ENCODE measurements at regions of chr5 and their contacts with region 1.

Region 1: DNA sequence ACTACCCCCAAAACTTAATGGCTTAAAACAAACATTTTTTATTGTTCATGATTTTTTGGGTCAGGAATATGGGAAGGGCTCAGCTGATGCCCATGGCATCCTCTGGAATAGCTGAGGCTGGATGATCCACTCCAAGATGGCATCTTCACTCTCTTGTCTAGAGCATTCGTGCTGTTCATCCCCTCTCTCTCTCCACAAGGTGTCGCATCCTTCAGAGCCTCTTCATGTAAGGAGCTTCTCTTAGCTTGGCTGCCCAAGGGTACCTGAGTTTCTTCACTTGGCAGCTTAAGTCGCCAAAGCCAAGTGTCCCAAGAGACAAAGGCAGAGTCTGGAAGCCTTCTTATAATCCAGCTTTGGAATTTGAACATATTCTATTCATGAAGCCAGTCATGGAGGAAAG is 294.7 kb downstream of the CHSY3 start:
- DNase-seq: peak; percentile 28
- ATAC-seq: peak; percentile 69
- H3K4me3 ChIP-seq: no peak overlapping the region
- H3K27ac ChIP-seq: no peak overlapping the region
- H3K4me1 ChIP-seq: no peaks in the 10 kb centered on the region
- H3K27me3 ChIP-seq: no peaks in the 10 kb centered on the region
- CTCF ChIP-seq: peak; percentile 52
- EP300 ChIP-seq: no peak
- POLR2A ChIP-seq: no peak
- RAD21 ChIP-seq: no peak

Region 2: DNA sequence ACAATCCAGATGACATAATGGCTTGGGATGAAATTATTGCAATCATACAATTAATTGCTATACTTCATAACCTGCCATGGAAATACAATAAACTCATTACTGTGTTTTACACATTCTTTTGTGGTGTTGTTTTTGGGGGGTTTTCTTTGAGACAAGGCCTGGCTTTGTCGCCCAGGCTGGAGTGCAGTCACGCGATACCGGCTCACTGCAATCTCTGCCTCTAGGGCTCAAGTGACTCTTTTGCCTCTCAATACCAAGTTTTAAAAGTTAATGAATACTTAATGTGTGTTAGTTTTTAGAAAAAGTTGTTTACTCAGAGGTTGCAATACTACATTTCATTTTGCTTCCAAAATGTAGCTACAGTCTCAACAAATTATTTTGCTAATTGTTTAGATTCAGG is 303.8 kb after region 1 on chr5:
- CTCF ChIA-PET with region 1: no interaction called
- POLR2A ChIA-PET with region 1: no interaction called
- in situ Hi-C with region 1: no loop called
- intact Hi-C with region 1: no loop called
- DNase-seq: no peak
- ATAC-seq: no peak
- H3K4me3 ChIP-seq: no peak overlapping the region
- H3K27ac ChIP-seq: no peak overlapping the region
- H3K4me1 ChIP-seq: no peaks in the 10 kb centered on the region
- H3K27me3 ChIP-seq: no peaks in the 10 kb centered on the region
- CTCF ChIP-seq: no peak
- EP300 ChIP-seq: no peak
- POLR2A ChIP-seq: no peak
- RAD21 ChIP-seq: no peak

Region 3: GRCh38 chr5:130545289-130545688 is 346.4 kb after region 1 on chr5:
- CTCF ChIA-PET with region 1: no interaction called
- POLR2A ChIA-PET with region 1: no interaction called
- in situ Hi-C with region 1: no loop called
- intact Hi-C with region 1: loop called (anchors 1 kb)
- DNase-seq: no peak
- ATAC-seq: no peak
- H3K4me3 ChIP-seq: no peak overlapping the region
- H3K27ac ChIP-seq: no peak overlapping the region
- H3K4me1 ChIP-seq: no peaks in the 10 kb centered on the region
- H3K27me3 ChIP-seq: no peaks in the 10 kb centered on the region; a peak in 1 of 5 replicates
- CTCF ChIP-seq: peak; percentile 32
- EP300 ChIP-seq: no peak
- POLR2A ChIP-seq: no peak
- RAD21 ChIP-seq: no peak

Region 4: GRCh38 chr5:130720355-130720754 is 521.4 kb after region 1 on chr5:
- CTCF ChIA-PET with region 1: no interaction called
- POLR2A ChIA-PET with region 1: no interaction called
- in situ Hi-C with region 1: no loop called
- intact Hi-C with region 1: loop called (anchors 2 kb)
- DNase-seq: peak; percentile 39
- ATAC-seq: peak; percentile 97
- H3K4me3 ChIP-seq: no peak overlapping the region
- H3K27ac ChIP-seq: no peak overlapping the region
- H3K4me1 ChIP-seq: no peaks in the 10 kb centered on the region
- H3K27me3 ChIP-seq: no peaks in the 10 kb centered on the region
- CTCF ChIP-seq: peak; percentile 59
- EP300 ChIP-seq: no peak
- POLR2A ChIP-seq: no peak
- RAD21 ChIP-seq: no peak